ENCODE measurements at regions of chr18 and their contacts with region 1.

Region 1: GRCh38 chr18:3593904-3594661 is 144.1 kb downstream of the TGIF1 start:
- DNase-seq: peak; percentile 93
- H3K4me3 Mint-ChIP-seq: peak overlapping the region; percentile 93
- H3K27ac Mint-ChIP-seq: peak overlapping the region; percentile 100
- H3K4me1 Mint-ChIP-seq: peaks cover 52% of the 10 kb centered on the region
- H3K27me3 Mint-ChIP-seq: no peaks in the 10 kb centered on the region

Region 2: GRCh38 chr18:2655178-2655953 is 938.7 kb before region 1 on chr18 and contains the start of gene SMCHD1:
- CTCF ChIA-PET with region 1: no interaction called
- POLR2A ChIA-PET with region 1: no interaction called
- intact Hi-C with region 1: loop called (anchors 10 kb)
- DNase-seq: peak; percentile 94
- H3K4me3 Mint-ChIP-seq: peak within 1 kb of the TSS; percentile 91
- H3K27ac Mint-ChIP-seq: peak within 1 kb of the TSS; percentile 97
- H3K4me1 Mint-ChIP-seq: peaks cover 29% of the 10 kb centered on the region
- H3K27me3 Mint-ChIP-seq: no peaks in the 10 kb centered on the region
- total RNA-seq, gene SMCHD1: 86.0 to 94.5 TPM

Region 3: DNA sequence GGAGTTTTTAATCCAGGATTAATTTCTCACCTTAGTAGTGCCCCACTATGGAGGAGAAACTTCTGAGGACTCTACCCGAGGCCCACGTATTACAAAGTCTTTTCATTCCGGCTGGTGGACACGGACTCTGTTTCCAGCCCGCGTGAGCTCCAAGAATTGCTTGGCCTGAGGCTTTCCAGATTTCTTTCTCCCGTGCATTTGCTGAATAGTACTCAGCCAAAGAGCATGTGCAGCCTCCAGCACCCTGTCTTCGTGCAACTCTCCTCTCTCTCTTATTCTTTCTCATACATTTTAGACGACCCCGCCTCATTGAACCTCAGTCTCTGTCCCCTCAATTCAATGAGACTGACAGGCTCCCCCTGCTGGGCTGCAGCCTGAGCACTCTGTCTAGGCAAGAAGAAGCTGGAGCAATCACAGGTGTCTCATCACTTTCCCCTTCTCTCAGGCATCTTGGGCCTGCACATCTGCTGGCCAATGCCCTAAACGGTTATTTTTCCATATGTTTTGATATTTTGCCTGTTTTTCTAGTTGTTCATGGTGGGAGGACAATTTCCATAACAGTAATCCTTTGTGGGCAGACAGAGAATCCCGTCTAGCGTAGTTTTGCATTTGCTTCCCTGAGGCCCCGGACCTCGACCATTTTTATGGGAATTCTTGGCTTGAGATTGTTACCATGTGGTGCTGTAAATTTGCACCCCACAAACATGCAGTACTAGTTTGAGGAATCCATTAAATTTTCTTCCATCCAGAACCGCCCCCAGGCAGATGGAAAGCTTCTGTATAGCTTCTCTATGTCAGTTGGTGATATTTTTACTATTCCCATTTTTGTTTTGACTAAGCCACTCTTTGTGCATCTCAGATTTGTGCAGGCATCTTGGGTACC is 531.0 kb before region 1 on chr18:
- CTCF ChIA-PET with region 1: no interaction called
- POLR2A ChIA-PET with region 1: no interaction called
- intact Hi-C with region 1: loop called (anchors 5 kb)
- DNase-seq: peak; percentile 86
- H3K4me3 Mint-ChIP-seq: peak overlapping the region; percentile 55
- H3K27ac Mint-ChIP-seq: peak overlapping the region; percentile 73
- H3K4me1 Mint-ChIP-seq: peaks cover 68% of the 10 kb centered on the region
- H3K27me3 Mint-ChIP-seq: no peaks in the 10 kb centered on the region

Region 4: DNA sequence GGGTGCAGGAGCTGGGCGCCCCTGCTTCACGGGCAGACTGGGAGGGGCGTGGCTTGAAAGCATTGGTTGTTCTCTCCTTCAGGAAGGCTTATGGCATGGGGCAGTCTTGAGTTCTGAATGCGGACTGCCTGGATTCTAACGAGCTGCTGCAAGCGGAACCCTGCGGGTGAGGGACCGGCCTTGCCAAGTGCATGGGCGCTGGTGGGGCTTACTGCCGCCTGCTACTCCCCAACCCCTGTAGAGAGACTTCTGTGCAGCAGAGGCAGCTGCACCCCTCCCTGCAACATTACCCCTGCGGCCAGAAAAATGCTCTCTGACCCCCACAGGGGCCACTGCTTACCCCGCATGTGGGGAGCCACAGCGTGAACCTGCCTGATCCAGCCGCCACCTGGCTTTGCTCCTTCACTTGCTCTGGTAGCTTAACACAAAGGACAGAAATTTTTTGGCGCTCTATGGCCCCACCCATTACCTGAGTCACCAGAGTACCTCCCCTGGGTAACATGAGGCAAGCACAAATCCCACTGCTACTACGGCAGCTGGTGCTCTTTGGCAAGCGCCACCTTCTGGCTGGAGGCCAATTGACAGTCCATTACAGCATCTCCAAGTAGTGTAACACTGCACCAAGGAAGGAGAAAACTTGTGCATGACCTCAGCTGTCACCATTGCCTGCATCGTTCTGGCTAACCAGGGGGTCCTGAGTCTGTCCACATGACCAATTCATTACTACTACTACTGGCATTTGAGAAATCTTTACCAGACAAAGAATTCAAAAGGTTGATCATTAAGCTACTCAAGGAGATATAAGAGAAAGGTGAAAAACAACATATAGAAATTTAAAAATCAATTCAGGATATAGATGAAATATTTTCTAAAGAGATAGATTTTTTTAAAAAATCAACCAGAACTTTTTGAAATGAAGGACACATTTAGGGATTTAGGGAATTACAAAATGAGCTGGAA is 296.8 kb before region 1 on chr18:
- CTCF ChIA-PET with region 1: interaction called, 20 read pairs
- POLR2A ChIA-PET with region 1: interaction called, 5 read pairs
- intact Hi-C with region 1: loop called (anchors 1 kb)
- DNase-seq: peak; percentile 97
- H3K4me3 Mint-ChIP-seq: peak overlapping the region; percentile 87
- H3K27ac Mint-ChIP-seq: peak overlapping the region; percentile 52
- H3K4me1 Mint-ChIP-seq: peaks cover 8% of the 10 kb centered on the region
- H3K27me3 Mint-ChIP-seq: peaks cover 17% of the 10 kb centered on the region

Region 5: GRCh38 chr18:3411854-3412268 is 182.2 kb before region 1 on chr18:
- CTCF ChIA-PET with region 1: interaction called, 3 read pairs
- POLR2A ChIA-PET with region 1: no interaction called
- intact Hi-C with region 1: loop called (anchors 1 kb)
- DNase-seq: peak; percentile 42
- H3K4me3 Mint-ChIP-seq: peak overlapping the region; percentile 25
- H3K27ac Mint-ChIP-seq: peak overlapping the region; percentile 8
- H3K4me1 Mint-ChIP-seq: peaks cover 16% of the 10 kb centered on the region
- H3K27me3 Mint-ChIP-seq: no peaks in the 10 kb centered on the region

Region 6: GRCh38 chr18:3525870-3526420 is 68.1 kb before region 1 on chr18:
- CTCF ChIA-PET with region 1: interaction called, 14 read pairs
- POLR2A ChIA-PET with region 1: interaction called, 5 read pairs
- intact Hi-C with region 1: no loop called
- DNase-seq: peak; percentile 71
- H3K4me3 Mint-ChIP-seq: peak overlapping the region; percentile 11
- H3K27ac Mint-ChIP-seq: peak overlapping the region; percentile 8
- H3K4me1 Mint-ChIP-seq: peaks cover 17% of the 10 kb centered on the region
- H3K27me3 Mint-ChIP-seq: no peaks in the 10 kb centered on the region

Region 7: DNA sequence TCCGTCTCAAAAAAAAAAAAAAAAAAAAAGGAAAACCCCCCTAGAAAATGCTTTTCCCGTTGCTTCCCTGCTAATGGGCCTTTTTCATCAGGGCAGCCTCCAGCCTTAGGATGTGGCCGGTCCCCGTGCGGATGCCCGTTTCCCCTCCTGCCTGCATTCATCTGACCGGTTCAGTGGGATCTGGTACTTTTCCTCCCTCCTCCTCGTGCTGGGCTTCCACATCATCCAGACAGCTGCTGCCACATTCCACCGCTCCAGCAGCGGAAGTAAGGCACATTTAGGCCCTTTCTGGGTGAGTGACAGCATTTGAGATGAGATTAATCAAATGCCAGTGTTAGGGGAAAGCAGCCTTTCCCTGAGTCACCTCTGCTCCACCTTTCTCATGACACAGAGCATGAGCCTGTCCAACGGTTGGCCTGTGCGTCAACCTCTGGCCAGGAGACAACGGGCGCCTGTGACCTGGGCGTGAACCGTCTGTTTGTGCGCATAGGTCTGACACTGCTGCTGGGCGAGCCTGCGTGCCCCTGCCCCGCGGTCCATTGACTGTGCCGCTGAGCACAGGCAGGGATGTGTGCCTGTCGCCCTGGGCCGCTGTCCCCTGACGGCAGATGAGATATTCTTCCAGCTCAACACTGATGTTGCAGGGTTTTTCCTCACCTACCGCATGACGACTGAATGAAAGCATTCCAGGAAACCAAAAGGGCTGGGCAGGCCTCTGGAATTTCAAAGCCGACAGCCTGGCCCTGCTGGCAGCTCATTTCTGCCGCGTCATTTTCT is 29.9 kb after region 1 on chr18:
- CTCF ChIA-PET with region 1: interaction called, 5 read pairs
- POLR2A ChIA-PET with region 1: no interaction called
- intact Hi-C with region 1: loop called (anchors 1 kb)
- DNase-seq: peak; percentile 64
- H3K4me3 Mint-ChIP-seq: peak overlapping the region; percentile 58
- H3K27ac Mint-ChIP-seq: peak overlapping the region; percentile 88
- H3K4me1 Mint-ChIP-seq: peaks cover 40% of the 10 kb centered on the region
- H3K27me3 Mint-ChIP-seq: no peaks in the 10 kb centered on the region

Region 8: GRCh38 chr18:3688699-3689098 is 94.6 kb after region 1 on chr18:
- CTCF ChIA-PET with region 1: no interaction called
- POLR2A ChIA-PET with region 1: no interaction called
- intact Hi-C with region 1: no loop called
- DNase-seq: no peak
- H3K4me3 Mint-ChIP-seq: no peak overlapping the region
- H3K27ac Mint-ChIP-seq: no peak overlapping the region
- H3K4me1 Mint-ChIP-seq: no peaks in the 10 kb centered on the region
- H3K27me3 Mint-ChIP-seq: peaks cover 3% of the 10 kb centered on the region

Measured in activated CD4-positive, alpha-beta memory T cell treated with anti-CD3 and anti-CD28 coated beads for 36 hours (primary cell).